ENCODE measurements at regions of chr1 and their contacts with region 1.

Region 1: DNA sequence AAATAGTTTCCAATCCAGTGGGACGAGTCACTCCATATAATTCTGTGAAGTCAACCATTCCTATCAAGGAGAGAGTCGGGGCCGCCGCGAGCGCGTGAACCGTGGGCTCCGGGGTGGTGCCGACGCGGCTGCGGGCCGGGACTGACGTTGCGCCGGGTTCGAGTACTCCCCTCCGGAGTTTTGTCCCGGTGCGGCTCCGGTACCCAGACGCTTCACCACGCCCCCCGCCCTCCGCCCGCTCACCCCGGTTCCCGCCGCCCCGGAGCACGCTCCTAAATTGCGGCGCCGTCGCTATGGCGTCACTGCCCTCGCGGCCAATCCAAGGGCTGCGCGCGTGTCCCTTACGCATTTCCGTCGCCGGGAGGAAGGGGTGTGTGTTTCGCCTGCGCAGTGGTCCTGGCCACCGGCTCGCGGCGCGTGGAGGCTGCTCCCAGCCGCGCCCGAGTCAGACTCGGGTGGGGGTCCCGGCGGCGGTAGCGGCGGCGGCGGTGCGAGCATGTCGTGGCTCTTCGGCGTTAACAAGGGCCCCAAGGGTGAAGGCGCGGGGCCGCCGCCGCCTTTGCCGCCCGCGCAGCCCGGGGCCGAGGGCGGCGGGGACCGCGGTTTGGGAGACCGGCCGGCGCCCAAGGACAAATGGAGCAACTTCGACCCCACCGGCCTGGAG is at the start of gene ATAD3B:
- DNase-seq: peak; percentile 98
- ATAC-seq: peak; percentile 92
- H3K4me3 ChIP-seq: peak within 1 kb of the TSS; percentile 88
- H3K27ac ChIP-seq: peak within 1 kb of the TSS; percentile 58
- H3K4me1 ChIP-seq: peaks cover 12% of the 10 kb centered on the region
- H3K27me3 ChIP-seq: no peaks in the 10 kb centered on the region
- CTCF ChIP-seq: no peak
- total RNA-seq, gene ATAD3B: 140 and 190 TPM in 2 replicates

Region 2: DNA sequence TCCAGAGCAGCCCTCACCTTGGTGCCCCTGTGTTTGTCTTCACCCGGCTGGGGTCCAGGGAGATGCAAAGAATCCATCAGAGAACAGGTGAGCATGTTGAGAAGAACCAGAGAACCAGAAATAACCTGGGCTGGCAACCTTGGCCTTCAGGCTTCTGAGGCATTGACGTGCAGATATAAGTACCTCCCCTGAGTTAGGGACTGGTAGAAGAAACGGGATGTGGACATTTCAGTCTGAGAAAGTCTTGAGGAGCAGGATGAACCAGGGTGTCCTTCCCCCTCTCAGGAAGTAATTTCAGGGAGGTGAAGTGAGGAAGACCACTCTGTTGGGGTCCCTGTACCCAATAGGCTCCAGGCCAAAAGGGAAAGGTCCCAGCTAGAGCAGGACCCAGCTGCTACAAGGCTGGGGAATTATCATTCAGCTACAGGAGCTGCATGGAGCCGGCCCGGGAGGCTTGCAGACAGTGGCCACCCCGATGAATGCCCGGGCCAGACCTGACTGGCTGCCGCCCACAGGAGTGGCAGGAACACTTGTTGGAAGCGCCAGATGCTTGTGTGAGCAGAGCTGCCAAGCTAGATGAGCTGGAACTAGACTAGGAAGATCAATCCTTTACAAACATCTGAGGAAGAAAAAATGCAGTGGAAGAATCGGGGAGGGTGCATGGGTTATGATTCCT is 94.8 kb before region 1 on chr1:
- CTCF ChIA-PET with region 1: no interaction called
- POLR2A ChIA-PET with region 1: no interaction called
- intact Hi-C with region 1: no loop called
- DNase-seq: no peak
- ATAC-seq: no peak
- H3K4me3 ChIP-seq: no peak overlapping the region
- H3K27ac ChIP-seq: no peak overlapping the region
- H3K4me1 ChIP-seq: peaks cover 20% of the 10 kb centered on the region
- H3K27me3 ChIP-seq: no peaks in the 10 kb centered on the region
- CTCF ChIP-seq: peak; percentile 6; the same call in 1 of the 2 replicates

Region 3: DNA sequence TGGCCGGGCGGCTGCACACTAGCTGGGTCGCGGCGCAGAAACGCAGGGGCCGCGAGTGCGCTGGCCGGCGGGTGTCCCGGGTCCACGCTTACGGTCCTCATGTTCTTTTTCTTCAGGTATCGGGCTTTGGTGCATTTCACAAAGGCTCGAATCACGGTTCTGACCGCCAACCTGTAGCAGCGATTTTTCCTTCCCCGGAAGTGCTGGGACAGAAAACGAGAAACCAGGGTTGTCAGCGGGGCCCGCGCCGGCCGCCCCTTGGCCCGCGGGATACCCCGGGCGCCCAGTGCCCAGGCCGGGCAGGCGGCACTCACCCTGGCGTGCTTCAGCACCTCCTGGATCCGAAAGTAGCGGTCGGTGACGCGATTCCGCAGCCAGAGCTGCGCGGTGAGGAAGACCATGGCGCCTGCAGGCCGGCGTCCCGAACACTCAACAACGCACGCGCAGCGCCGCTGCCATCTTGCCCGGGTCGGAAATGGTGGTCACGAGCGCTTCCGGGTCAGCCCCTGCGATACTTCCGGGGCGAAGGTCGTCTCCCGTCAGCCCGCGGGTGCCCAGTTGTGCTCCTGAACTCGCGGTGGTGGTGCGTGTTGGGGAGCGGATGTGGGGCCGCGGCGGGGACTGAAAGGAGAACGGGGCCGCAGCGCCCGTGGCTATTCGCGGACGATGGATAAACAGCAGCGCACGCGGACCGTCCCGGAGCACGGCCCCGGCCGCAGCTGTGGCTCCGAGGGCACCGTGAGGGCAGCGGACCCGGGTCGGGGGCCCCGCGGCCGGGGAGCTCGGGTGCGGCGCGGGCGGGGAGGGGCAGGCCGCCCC is 64.5 kb before region 1 on chr1 and contains the start of gene MRPL20:
- CTCF ChIA-PET with region 1: no interaction called
- POLR2A ChIA-PET with region 1: no interaction called
- intact Hi-C with region 1: loop called (anchors 1 kb)
- DNase-seq: peak; percentile 96
- ATAC-seq: peak; percentile 90
- H3K4me3 ChIP-seq: peak within 1 kb of the TSS; percentile 84
- H3K27ac ChIP-seq: peak within 1 kb of the TSS; percentile 61
- H3K4me1 ChIP-seq: peaks cover 23% of the 10 kb centered on the region
- H3K27me3 ChIP-seq: no peaks in the 10 kb centered on the region
- CTCF ChIP-seq: no peak
- total RNA-seq, gene MRPL20: 439 and 506 TPM in 2 replicates

Region 4: GRCh38 chr1:1511533-1512285 is 40.2 kb after region 1 on chr1 and contains the start of gene ATAD3A:
- CTCF ChIA-PET with region 1: no interaction called
- POLR2A ChIA-PET with region 1: no interaction called
- intact Hi-C with region 1: loop called (anchors 1 kb)
- DNase-seq: peak; percentile 100
- ATAC-seq: peak; percentile 82
- H3K4me3 ChIP-seq: peak within 1 kb of the TSS; percentile 91
- H3K27ac ChIP-seq: peak within 1 kb of the TSS; percentile 85
- H3K4me1 ChIP-seq: peaks cover 9% of the 10 kb centered on the region
- H3K27me3 ChIP-seq: no peaks in the 10 kb centered on the region
- CTCF ChIP-seq: no peak
- total RNA-seq, gene ATAD3A: 186 and 243 TPM in 2 replicates

Region 5: GRCh38 chr1:1594602-1595260 is 123.2 kb after region 1 on chr1:
- CTCF ChIA-PET with region 1: no interaction called
- POLR2A ChIA-PET with region 1: no interaction called
- intact Hi-C with region 1: no loop called
- DNase-seq: no peak
- ATAC-seq: peak; percentile 29
- H3K4me3 ChIP-seq: no peak overlapping the region
- H3K27ac ChIP-seq: no peak overlapping the region
- H3K4me1 ChIP-seq: peaks cover 9% of the 10 kb centered on the region
- H3K27me3 ChIP-seq: no peaks in the 10 kb centered on the region
- CTCF ChIP-seq: no peak